ENCODE measurements at regions of chr17 and their contacts with region 1.

Region 1: GRCh38 chr17:14052886-14053615 is 16.3 kb upstream of the COX10 start:
- DNase-seq: no peak
- H3K4me3 ChIP-seq: no peak overlapping the region
- H3K27ac ChIP-seq: no peak overlapping the region
- H3K4me1 ChIP-seq: no peaks in the 10 kb centered on the region
- H3K27me3 ChIP-seq: no peaks in the 10 kb centered on the region
- CTCF ChIP-seq: no peak
- POLR2A ChIP-seq: no peak

Region 2: DNA sequence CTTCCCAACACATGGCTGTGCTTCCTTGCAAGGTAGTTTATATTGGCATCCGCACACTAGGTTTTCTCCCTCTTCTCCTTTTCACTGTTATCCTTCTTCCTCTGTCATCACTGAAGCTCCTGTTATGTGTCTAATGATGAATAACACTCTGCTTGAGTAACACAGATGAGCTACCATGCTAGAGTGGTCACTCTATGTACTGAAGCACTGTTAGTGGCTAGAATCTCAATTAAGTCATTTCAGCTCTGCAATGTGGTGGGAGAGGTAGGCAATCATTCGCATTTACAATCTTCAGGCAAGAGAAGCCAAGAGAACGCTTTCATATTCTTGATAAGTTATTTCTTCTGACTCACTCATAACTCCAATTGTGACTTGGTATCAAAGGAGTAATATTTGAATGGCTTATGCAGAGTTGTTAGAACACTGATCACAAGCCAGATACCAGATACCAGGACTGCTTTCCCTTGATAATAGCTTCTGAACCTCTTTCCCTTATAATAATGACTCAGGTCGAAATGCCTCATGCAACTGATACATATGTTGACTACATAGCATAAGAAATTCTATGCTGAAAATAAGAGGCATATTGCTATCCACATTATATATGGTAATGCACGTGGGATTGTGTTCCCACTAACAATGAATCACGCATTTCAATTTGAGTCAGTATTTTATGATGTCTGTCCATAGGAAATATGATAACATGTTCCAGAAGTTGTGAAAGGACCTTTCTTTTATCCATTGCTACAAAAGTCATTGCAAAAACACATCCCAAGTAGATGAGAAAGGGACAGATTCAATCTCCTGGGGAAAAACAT is 293.3 kb before region 1 on chr17:
- intact Hi-C with region 1: no loop called
- DNase-seq: no peak
- H3K4me3 ChIP-seq: no peak overlapping the region
- H3K27ac ChIP-seq: no peak overlapping the region
- H3K4me1 ChIP-seq: no peaks in the 10 kb centered on the region
- H3K27me3 ChIP-seq: peaks cover 0 to 7% (median 0%) of the 10 kb centered on the region in 7 donors
- CTCF ChIP-seq: no peak
- POLR2A ChIP-seq: no peak

Region 3: DNA sequence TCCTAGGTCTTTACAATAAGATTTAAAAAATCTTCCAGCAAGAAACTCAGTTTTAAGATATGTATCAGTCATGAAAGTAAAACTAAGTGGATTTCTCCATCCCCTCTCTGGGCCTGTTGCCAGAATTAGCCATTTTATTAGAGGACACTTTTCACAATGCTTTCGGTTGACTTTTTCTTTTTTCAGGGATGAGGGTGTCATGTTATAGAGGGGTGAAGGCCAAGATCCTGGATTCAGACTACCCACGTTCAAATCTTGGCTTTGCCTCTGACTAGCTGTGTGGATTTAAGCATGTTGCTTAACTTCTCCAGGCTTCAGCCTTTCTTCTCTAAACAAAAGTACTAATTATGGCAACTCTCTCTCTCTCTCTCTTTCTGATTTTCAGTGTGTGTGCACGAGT is 95.4 kb before region 1 on chr17:
- intact Hi-C with region 1: loop called (anchors 10 kb)
- DNase-seq: no peak
- H3K4me3 ChIP-seq: no peak overlapping the region
- H3K27ac ChIP-seq: peak overlapping the region in 1 of 8 donors; percentile 0
- H3K4me1 ChIP-seq: no peaks in the 10 kb centered on the region
- H3K27me3 ChIP-seq: no peaks in the 10 kb centered on the region
- CTCF ChIP-seq: no peak
- POLR2A ChIP-seq: no peak

Measured in spleen (tissue), 13 donors.